Vagina (tissue), 2 donors: ENCODE measurements at regions of chr14 and their contacts with region 1.

Region 1: GRCh38 chr14:50173891-50174290 is 57.5 kb downstream of the SOS2 start:
- DNase-seq: no peak
- H3K4me3 ChIP-seq: no peak overlapping the region
- H3K27ac ChIP-seq: no peak overlapping the region
- H3K4me1 ChIP-seq: no peaks in the 10 kb centered on the region
- H3K27me3 ChIP-seq: no peaks in the 10 kb centered on the region
- CTCF ChIP-seq: no peak
- POLR2A ChIP-seq: no peak

Region 2: DNA sequence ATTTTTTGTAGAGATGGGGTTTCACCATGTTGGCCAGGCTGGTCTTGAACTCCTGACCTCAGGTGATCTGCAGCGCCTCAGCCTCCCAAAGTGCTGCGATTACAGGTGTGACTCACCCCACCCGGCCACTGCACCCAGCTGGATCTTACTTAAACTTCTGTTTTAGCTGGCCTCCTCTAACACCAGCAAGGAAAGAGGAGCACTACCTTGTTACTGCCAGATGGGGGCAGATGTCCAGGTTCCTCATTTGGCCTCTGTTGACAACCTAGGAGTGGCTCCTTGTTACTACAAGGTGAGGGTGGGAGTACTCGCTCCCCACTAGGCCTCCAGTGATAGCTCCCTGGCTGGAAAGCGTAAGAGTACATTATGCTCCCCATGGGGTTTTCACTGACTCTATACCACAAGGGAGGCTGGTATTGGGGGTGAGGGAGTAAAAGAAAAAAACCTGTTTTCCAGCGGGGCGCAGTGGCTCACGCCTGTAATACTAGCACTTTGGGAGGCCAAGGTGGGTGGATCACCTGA is 294.1 kb before region 1 on chr14:
- intact Hi-C with region 1: no loop called
- DNase-seq: peak in 1 of 2 donors; percentile 83
- H3K4me3 ChIP-seq: no peak overlapping the region
- H3K27ac ChIP-seq: no peak overlapping the region
- H3K4me1 ChIP-seq: peaks cover 13% of the 10 kb centered on the region
- H3K27me3 ChIP-seq: no peaks in the 10 kb centered on the region
- CTCF ChIP-seq: peak in 2 of 3 experiments; percentile 11 to 42
- POLR2A ChIP-seq: no peak

Region 3: GRCh38 chr14:49892636-49893308 is 281.1 kb before region 1 on chr14 and contains the start of gene ARF6:
- intact Hi-C with region 1: no loop called
- DNase-seq: peak; percentile 97 to 98
- H3K4me3 ChIP-seq: peak within 1 kb of the TSS; percentile 89 to 95
- H3K27ac ChIP-seq: peak within 1 kb of the TSS; percentile 100
- H3K4me1 ChIP-seq: peaks cover 49% of the 10 kb centered on the region
- H3K27me3 ChIP-seq: no peaks in the 10 kb centered on the region
- CTCF ChIP-seq: no peak
- POLR2A ChIP-seq: peak; percentile 60 to 93
- total RNA-seq, gene ARF6: 48.6 TPM

Region 4: DNA sequence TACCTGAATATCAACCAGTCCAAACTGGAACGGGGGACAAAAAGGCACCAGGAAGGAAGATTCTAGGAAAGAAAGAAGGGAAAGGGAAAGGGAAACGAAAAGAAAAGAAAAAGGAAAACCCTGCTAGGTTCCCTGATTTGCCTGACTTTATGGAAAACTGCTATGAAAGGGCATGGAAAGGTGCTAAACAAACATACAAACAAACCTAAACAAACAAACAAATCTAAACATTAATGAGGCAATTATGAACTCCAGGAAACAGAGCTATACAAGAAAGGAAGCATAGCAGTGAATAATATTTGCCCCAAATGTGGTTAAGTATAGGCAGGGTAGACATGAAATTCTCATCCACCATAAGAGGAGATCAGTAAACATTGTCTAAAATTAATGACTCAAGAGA is 45.7 kb before region 1 on chr14:
- intact Hi-C with region 1: no loop called
- DNase-seq: no peak
- H3K4me3 ChIP-seq: no peak overlapping the region
- H3K27ac ChIP-seq: no peak overlapping the region
- H3K4me1 ChIP-seq: no peaks in the 10 kb centered on the region
- H3K27me3 ChIP-seq: no peaks in the 10 kb centered on the region
- CTCF ChIP-seq: no peak
- POLR2A ChIP-seq: no peak

Region 5: DNA sequence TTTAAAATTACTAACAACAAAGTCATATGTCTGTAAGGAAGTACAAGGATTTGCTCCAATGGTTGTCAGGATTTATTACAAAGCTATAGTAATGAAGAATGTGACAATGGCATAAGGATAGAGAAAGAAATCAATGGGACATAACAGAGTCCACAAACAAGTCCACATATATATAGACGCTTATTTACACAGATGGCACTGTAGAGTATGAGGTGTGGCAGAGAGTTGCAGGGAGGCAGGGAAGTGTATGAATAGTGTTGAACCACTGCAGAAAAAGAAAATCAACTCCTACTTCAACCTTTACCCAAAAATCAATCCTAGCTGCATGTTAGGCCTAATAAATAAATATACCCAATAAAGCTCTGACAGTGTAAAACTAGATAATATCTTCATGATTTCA is 36.2 kb after region 1 on chr14:
- intact Hi-C with region 1: loop called (anchors 2 kb)
- DNase-seq: no peak
- H3K4me3 ChIP-seq: no peak overlapping the region
- H3K27ac ChIP-seq: no peak overlapping the region
- H3K4me1 ChIP-seq: peaks cover 28% of the 10 kb centered on the region
- H3K27me3 ChIP-seq: no peaks in the 10 kb centered on the region
- CTCF ChIP-seq: no peak
- POLR2A ChIP-seq: no peak